Mammary epithelial cell (primary cell): ENCODE measurements at regions of chr6 and their contacts with region 1.

Region 1: GRCh38 chr6:155248008-155249001 is 15.5 kb upstream of the CLDN20 start:
- DNase-seq: peak; percentile 26
- H3K4me3 ChIP-seq: no peak overlapping the region
- H3K27ac ChIP-seq: no peak overlapping the region
- H3K4me1 ChIP-seq: peaks cover 6% of the 10 kb centered on the region
- H3K27me3 ChIP-seq: no peaks in the 10 kb centered on the region
- CTCF ChIP-seq: peak; percentile 59 to 82

Region 2: GRCh38 chr6:154868143-154868594 is 380.1 kb before region 1 on chr6:
- CTCF ChIA-PET with region 1: no interaction called
- dilution Hi-C with region 1: no loop called
- in situ Hi-C with region 1: no loop called
- intact Hi-C with region 1: loop called (anchors 1 kb)
- DNase-seq: peak; percentile 40
- H3K4me3 ChIP-seq: no peak overlapping the region
- H3K27ac ChIP-seq: no peak overlapping the region
- H3K4me1 ChIP-seq: no peaks in the 10 kb centered on the region
- H3K27me3 ChIP-seq: no peaks in the 10 kb centered on the region
- CTCF ChIP-seq: peak; percentile 50 to 70

Region 3: DNA sequence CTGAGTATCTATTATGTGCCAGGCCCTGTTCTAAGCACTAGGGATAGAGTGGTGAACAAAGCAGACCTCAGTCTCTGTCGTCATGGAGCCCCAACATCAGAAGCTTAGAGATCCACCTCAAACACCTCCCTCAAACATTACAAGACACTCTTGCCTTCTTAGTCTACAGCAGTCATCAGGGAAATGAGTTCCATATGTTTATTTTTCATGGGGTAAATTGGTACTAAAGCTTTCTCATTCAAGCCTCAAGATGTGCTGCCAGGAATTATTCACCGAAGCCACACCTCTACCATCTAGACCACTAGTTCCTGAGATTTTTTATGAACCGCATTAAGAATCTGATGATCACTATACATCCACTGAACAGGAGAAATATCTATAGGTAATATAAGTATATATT is 125.0 kb after region 1 on chr6:
- CTCF ChIA-PET with region 1: no interaction called
- dilution Hi-C with region 1: no loop called
- in situ Hi-C with region 1: no loop called
- intact Hi-C with region 1: no loop called
- DNase-seq: no peak
- H3K4me3 ChIP-seq: no peak overlapping the region
- H3K27ac ChIP-seq: no peak overlapping the region
- H3K4me1 ChIP-seq: peaks cover 8% of the 10 kb centered on the region
- H3K27me3 ChIP-seq: no peaks in the 10 kb centered on the region
- CTCF ChIP-seq: no peak